ENCODE measurements at regions of chr6 and their contacts with region 1.

Region 1: DNA sequence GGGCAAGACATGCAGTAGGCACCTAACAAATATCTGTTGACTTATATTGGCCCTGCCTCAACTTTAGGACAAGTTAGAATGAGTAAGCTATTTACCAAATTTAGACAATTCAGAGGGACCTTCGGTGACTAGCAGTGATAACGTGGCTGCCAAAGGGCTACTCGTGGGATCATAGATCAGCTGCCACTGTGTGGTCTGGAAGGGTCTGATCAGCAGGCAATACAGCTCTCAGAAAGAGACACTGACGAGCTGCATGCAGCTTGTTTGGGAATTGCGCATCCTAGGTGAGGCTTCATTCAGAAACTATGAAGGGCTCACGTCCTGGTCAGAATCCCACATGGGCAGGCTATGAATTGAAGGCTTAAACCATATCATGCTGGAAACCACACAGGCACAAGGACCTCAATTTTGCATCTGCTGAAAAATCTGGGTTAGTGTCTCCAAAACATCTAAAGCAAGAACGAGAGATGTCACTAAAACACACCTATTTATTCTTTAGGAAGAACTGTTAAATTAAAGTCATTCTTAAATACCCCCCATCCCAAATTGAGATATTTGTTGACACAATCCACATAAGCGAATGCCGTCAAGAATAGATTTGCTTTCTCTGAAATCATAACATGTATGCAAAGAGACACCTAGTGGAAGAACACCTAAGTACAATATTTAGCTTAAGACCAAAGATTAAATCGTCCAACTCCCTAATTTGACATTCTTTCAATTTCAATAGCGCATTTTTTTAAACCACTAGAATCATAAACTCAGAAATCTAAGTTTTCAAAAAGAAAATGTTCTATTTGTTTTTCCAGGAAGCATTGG is 79.6 kb downstream of the IPCEF1 start:
- DNase-seq: no peak
- H3K4me3 Mint-ChIP-seq: peak overlapping the region; percentile 27
- H3K27ac Mint-ChIP-seq: no peak overlapping the region
- H3K4me1 Mint-ChIP-seq: peaks cover 35% of the 10 kb centered on the region
- H3K27me3 Mint-ChIP-seq: peaks cover 8% of the 10 kb centered on the region

Region 2: DNA sequence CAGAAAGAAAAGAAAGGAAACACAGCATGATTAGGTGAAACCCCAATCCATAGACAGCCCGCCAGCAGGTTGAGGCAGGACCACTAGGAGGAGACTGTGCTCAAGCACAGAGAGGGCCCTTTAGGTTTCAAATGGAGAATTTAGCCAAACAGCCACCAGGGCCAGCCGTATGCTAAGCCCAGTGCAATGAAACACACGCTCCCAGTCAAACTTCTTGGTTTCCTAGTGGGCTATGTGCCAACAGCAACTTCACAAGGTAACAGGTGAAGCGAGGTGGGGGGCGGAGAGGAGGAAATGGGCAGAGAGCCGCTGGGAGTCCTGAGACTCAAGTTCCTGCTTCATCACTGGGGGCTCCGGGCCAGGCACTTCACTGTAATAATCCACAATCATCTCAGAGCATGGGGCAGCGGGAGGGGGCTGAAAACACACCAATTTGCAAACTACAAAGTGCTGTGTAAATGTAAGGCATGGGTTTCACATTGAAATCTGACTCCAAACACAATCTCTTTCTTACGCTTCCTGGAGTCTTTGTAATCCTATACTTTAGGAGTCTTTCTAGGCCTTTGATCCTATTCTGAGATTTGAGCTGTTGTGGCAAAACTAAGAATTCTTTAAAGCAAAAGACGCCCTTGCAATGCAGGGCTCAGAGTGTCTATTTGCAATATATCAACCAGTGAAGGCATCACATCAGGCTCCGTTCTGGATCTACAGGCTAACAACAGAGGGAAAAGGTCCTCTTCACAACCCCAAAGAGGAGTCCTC is 120.7 kb before region 1 on chr6:
- CTCF ChIA-PET with region 1: interaction called, 23 read pairs
- POLR2A ChIA-PET with region 1: no interaction called
- DNase-seq: peak; percentile 70
- H3K4me3 Mint-ChIP-seq: peak overlapping the region; percentile 70
- H3K27ac Mint-ChIP-seq: peak overlapping the region; percentile 82
- H3K4me1 Mint-ChIP-seq: peaks cover 37% of the 10 kb centered on the region
- H3K27me3 Mint-ChIP-seq: no peaks in the 10 kb centered on the region

Region 3: DNA sequence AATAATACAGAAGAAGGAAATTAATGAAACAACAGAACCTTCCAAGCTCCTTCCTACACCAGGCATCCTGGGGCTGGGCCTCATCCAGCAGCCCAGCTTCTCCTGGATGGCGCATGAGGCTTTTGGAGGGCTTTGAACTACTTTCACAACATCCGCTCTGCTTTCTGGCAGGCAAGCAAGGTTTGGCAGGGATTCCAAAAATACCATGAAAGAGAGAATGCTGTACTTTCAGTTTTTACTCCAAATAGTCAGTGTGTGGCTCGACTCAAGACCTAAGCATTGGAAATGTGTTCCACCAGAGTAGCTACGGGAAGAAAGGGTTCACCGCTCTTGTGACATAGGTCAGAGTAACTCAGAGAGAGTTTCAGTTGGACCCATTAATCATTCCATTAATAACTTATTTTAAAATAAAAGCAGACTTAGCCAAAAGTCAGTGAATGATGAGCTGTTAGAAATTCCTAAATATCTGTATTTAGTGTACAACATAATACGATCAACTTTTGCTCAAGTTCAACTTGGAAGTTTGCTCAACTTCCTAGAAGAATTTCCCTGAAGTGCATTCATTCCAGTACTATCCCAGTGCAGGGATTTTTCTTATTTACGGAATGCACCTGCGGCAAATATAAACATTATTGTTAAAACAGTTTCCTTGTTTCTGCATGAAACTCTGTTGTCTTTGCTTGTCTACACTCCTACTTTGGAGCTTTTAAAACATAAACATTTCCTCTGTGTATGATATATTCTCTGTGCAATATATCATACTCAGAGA is 112.4 kb before region 1 on chr6:
- CTCF ChIA-PET with region 1: interaction called, 10 read pairs
- POLR2A ChIA-PET with region 1: no interaction called
- DNase-seq: no peak
- H3K4me3 Mint-ChIP-seq: no peak overlapping the region
- H3K27ac Mint-ChIP-seq: no peak overlapping the region
- H3K4me1 Mint-ChIP-seq: peaks cover 17% of the 10 kb centered on the region
- H3K27me3 Mint-ChIP-seq: no peaks in the 10 kb centered on the region